Motor neuron (in vitro differentiated cells): ENCODE measurements at regions of chr19 and their contacts with region 1.

Region 1: DNA sequence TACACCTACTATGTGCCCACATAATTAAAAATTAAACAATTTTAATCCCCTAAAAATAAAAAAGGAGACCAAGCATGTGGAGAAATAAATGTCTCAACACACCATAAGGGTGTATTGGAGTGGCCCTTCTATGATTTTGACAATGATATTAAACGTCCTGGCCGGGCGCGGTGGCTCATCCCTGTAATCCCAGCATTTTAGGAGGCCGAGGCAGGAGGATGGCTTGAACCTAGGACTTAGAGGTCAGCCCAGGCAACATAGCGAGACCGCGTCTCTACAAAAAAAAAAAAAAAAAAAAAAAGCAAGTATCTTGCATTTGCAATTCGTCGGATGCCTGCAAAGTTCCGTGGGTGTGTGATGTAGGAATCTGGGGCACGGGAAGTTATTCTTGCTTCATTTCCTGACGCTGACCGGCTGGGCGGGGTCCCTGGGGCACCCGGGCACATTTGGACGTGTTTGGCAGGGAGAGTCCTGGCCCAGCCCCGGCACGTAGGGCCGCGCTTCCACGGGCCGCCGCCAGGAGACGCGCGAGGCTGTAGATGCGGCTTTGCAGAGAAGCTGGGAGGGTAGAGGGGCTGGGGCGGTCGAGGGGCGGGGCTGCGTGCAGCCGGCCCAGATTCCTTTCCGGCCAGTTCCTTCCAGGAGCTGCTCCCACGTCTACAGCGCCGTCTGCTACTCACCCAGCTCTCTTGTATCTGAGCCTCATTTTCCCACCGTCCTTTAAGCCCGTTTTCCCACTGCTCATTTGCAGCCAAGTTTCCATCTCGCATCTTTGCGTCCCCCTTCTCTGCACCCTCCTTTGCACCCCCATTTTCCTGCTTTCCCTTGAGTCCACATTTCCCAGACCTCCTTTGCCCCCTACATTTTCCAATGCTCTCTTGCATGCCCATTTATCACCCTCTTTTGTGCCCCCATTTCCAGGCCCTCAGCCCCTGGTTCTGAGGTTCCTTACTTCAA is 2.2 kb upstream of the TSPAN16 start:
- ATAC-seq: peak; percentile 91 to 98 (median 96)
- H3K4me3 ChIP-seq: peak overlapping the region in 3 of 5 donors; percentile 0 to 24 (median 7)
- H3K27ac ChIP-seq: peak overlapping the region in 1 of 2 donors; percentile 25
- H3K4me1 ChIP-seq: peaks cover 0 to 2% of the 10 kb centered on the region in 2 donors

Region 2: GRCh38 chr19:11482384-11483050 is 188.8 kb after region 1 on chr19:
- in situ Hi-C with region 1: loop called in 3 of 9 experiments (anchors 25 kb)
- ATAC-seq: peak; percentile 34 to 81 (median 49)
- H3K4me3 ChIP-seq: peak overlapping the region; percentile 35 to 98 (median 75)
- H3K27ac ChIP-seq: peak overlapping the region; percentile 76 to 79
- H3K4me1 ChIP-seq: peaks cover 0 to 10% of the 10 kb centered on the region in 2 donors